ENCODE measurements at regions of chr1 and their contacts with region 1.

Region 1: DNA sequence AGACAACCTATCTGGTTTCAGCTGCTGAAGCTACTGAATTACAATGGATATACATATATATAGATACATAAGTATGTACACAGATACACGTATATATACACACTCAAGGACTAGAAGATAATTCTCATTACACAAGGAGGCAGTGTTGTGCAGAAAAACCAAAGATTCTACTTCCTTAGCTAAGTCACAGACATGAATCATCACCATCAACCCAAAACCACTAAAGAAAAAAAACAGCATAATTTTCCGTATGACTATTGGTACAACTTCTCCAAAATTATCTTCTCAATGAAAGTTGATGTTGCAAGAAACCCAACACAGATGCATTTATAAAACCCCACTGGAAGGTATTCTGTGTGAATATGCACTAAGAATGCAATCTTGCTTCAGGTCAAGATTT is 36.8 kb upstream of the RPF1 start:
- DNase-seq: no peak
- H3K4me3 Mint-ChIP-seq: peak overlapping the region; percentile 38
- H3K27ac Mint-ChIP-seq: peak overlapping the region; percentile 83
- H3K4me1 Mint-ChIP-seq: peaks cover 22% of the 10 kb centered on the region
- H3K27me3 Mint-ChIP-seq: peaks cover 10% of the 10 kb centered on the region

Region 2: GRCh38 chr1:84478876-84479868 is 36.9 kb after region 1 on chr1 and contains the start of gene RPF1:
- CTCF ChIA-PET with region 1: interaction called, 12 read pairs
- POLR2A ChIA-PET with region 1: interaction called, 4 read pairs
- DNase-seq: peak; percentile 81
- H3K4me3 Mint-ChIP-seq: peak within 1 kb of the TSS; percentile 96
- H3K27ac Mint-ChIP-seq: peak within 1 kb of the TSS; percentile 95
- H3K4me1 Mint-ChIP-seq: peaks cover 34% of the 10 kb centered on the region
- H3K27me3 Mint-ChIP-seq: peaks cover 22% of the 10 kb centered on the region
- total RNA-seq, gene RPF1: 37.8 to 39.7 TPM

Region 3: DNA sequence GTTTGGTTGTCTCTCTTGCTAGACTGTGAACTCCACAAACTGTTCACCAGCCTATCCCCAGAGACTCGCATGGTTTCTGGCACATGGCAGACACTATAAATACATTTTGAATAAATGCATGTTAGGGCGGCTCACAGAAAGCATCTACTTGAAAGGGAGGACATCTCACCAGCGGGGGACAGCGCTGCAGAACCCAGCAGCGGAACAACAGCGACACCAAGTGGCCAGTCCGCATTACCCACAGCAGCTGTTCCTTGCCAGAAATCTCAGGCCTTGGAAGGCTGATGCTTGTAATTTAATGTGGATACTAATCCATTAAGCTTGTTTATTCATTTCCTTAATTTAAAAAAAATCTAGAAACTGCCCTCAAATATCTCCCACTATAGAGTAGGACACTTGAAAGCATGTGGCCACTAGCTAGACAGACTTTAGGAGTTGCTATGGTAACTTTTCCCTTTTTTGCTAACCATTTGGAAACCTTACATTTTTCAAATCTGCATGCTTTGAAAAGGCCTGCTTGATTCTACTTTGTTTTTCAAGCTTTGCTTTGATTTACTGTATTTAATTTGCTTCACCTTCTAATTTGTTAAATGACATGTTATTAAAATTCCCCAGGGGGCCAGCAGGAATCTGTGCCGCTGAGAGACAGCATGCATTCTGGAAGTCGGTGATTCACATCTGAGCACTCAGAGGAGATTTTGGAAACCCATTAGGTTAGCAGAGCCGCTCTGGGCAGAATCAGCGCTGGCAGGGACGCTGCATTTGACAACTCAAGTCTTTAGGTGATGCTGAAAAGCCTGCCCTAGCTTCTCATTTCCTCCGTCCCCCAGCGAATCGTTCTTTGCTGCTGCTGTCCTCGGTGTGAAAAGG is 311.5 kb after region 1 on chr1:
- CTCF ChIA-PET with region 1: interaction called, 24 read pairs
- POLR2A ChIA-PET with region 1: interaction called, 7 read pairs
- DNase-seq: peak; percentile 83
- H3K4me3 Mint-ChIP-seq: no peak overlapping the region
- H3K27ac Mint-ChIP-seq: no peak overlapping the region
- H3K4me1 Mint-ChIP-seq: peaks cover 16% of the 10 kb centered on the region
- H3K27me3 Mint-ChIP-seq: peaks cover 19% of the 10 kb centered on the region